ENCODE measurements at regions of chr5 and their contacts with region 1.

Region 1: DNA sequence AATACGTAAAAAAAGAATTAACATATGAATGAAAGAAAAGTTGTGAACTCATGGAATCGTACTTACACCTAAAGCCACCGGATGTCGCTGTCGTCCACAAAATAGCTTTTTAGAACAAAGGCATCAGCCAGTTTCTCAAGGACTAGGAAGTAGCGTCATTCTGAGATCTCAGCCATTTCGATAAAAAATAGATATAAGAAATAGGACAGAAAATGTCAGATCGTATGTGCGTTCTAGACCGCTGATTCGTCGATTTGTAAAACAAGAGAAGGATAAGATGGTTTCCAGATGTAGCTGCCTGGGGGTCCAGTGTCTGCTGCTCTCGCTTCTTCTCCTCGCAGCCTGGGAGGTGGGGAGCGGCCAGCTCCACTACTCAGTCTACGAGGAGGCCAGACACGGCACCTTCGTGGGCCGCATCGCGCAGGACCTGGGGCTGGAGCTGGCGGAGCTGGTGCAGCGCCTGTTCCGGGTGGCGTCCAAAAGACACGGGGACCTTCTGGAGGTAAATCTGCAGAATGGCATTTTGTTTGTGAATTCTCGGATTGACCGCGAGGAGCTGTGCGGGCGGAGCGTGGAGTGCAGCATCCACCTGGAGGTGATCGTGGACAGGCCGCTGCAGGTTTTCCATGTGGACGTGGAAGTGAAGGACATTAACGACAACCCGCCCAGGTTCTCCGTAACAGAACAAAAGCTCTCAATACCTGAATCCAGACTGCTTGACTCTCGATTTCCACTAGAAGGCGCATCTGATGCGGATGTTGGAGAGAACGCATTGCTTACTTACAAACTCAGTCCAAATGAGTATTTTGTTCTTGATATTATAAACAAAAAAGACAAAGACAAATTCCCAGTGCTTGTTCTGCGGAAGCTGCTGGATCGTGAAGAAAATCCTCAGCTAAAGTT is at the start of gene PCDHA10:
- DNase-seq: peak; percentile 48
- ATAC-seq: peak; percentile 84
- H3K4me3 Mint-ChIP-seq: peak within 1 kb of the TSS; percentile 92
- H3K27ac Mint-ChIP-seq: peak within 1 kb of the TSS; percentile 78
- H3K4me1 Mint-ChIP-seq: peaks cover 23% of the 10 kb centered on the region
- H3K27me3 Mint-ChIP-seq: no peaks in the 10 kb centered on the region
- CTCF ChIP-seq: peak; percentile 36
- total RNA-seq, gene PCDHA10: 10.8 to 12.0 TPM (median 11.6 TPM) in 3 replicates

Region 2: DNA sequence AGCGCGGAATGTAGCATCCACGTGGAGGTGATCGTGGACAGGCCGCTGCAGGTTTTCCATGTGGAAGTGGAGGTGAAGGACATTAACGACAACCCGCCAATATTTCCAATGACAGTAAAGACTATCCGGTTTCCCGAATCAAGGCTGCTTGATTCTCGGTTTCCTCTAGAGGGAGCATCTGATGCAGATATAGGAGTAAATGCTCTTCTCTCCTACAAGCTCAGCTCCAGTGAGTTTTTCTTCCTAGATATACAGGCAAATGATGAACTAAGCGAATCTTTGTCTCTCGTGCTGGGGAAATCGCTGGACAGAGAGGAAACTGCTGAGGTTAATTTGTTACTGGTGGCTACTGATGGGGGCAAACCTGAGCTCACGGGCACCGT is 60.8 kb before region 1 on chr5:
- CTCF ChIA-PET with region 1: interaction called, 14 read pairs
- POLR2A ChIA-PET with region 1: no interaction called
- DNase-seq: no peak
- ATAC-seq: peak; percentile 88
- H3K4me3 Mint-ChIP-seq: peak overlapping the region; percentile 87
- H3K27ac Mint-ChIP-seq: 0 out of 2 replicates have a peak overlapping the region, but pooled peaks have one; percentile 27
- H3K4me1 Mint-ChIP-seq: peaks cover 4% of the 10 kb centered on the region; the same call in 1 of the 2 replicates
- H3K27me3 Mint-ChIP-seq: no peaks in the 10 kb centered on the region
- CTCF ChIP-seq: no peak

Region 3: GRCh38 chr5:140806834-140807775 is 48.9 kb before region 1 on chr5 and contains the start of gene PCDHA4:
- CTCF ChIA-PET with region 1: interaction called, 19 read pairs
- POLR2A ChIA-PET with region 1: no interaction called
- DNase-seq: peak; percentile 90
- ATAC-seq: peak; percentile 89
- H3K4me3 Mint-ChIP-seq: peak within 1 kb of the TSS; percentile 92
- H3K27ac Mint-ChIP-seq: peak within 1 kb of the TSS; percentile 36; the same call in 1 of the 2 replicates
- H3K4me1 Mint-ChIP-seq: peaks cover 7% of the 10 kb centered on the region
- H3K27me3 Mint-ChIP-seq: no peaks in the 10 kb centered on the region
- CTCF ChIP-seq: peak; percentile 80
- total RNA-seq, gene PCDHA4: 5.4 to 6.3 TPM (median 5.6 TPM) in 3 replicates

Region 4: DNA sequence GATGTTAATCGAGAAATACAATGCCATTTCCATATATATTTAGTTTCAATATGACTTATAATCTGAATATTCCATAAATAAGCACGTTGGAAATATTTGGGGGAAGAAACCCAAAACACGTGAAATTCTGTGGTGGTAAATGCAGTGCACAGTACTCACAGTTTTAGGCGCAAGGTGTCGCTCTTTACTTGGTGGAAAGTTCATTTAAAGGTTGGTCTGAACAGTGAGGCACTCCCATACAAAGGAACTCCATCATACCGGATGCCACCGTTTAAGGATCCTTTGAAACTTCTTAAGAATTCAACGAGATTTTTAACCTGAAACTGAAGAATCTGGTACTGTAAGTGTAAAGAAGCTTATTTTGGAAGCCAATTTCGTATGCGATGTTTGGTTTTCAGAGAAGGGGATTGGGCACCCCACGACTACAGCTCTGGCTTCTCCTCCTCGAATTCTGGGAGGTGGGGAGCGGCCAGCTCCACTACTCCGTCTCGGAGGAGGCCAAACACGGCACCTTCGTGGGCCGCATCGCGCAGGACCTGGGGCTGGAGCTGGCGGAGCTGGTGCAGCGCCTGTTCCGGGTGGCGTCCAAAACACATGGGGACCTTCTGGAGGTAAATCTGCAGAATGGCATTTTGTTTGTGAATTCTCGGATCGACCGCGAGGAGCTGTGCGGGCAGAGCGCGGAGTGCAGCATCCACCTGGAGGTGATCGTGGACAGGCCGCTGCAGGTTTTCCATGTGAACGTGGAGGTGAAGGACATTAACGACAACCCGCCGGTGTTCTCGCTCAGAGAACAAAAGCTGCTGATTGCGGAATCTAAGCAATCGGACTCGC is 12.9 kb after region 1 on chr5 and contains the start of gene PCDHA11:
- CTCF ChIA-PET with region 1: interaction called, 71 read pairs
- POLR2A ChIA-PET with region 1: interaction called, 10 read pairs
- DNase-seq: no peak
- ATAC-seq: peak; percentile 93
- H3K4me3 Mint-ChIP-seq: peak within 1 kb of the TSS; percentile 88
- H3K27ac Mint-ChIP-seq: peak within 1 kb of the TSS; percentile 78
- H3K4me1 Mint-ChIP-seq: peaks cover 16% of the 10 kb centered on the region
- H3K27me3 Mint-ChIP-seq: no peaks in the 10 kb centered on the region
- CTCF ChIP-seq: no peak
- total RNA-seq, gene PCDHA11: 5.8 to 8.7 TPM (median 7.9 TPM) in 3 replicates

Region 5: DNA sequence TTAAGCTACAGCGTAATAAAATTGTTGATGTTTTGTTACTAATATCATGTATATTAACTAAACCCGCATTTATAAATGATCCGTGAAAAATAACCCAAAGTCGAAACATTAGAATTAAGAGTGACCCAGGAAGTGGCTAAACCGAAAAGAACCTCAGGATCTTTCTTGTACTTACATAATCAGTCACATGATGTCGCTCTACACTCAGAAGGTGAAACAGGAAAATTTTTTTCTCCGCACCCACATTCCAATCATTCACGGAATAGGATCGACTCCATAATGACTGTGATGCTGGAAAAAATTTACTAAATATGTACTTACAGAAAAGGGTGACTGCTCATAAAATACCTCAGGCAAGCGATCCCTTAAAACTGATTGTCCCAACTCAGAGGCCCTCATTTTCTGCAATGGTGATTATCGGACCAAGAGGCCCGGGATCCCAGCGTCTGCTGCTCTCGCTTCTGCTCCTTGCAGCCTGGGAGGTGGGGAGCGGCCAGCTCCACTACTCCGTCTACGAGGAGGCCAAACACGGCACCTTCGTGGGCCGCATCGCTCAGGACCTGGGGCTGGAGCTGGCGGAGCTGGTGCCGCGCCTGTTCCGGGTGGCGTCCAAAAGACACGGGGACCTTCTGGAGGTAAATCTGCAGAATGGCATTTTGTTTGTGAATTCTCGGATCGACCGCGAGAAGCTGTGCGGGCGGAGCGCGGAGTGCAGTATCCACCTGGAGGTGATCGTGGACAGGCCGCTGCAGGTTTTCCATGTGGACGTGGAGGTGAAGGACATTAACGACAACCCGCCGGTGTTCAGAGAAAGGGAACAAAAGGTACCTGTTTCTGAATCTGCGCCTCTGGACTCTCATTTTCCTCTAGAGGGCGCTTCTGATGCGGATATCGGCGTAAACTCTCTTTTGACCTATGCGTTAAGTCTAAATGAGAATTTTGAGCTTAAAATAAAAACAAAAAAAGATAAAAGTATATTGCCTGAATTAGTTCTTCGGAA is 19.3 kb after region 1 on chr5 and contains the start of gene PCDHA12:
- CTCF ChIA-PET with region 1: interaction called, 29 read pairs
- POLR2A ChIA-PET with region 1: no interaction called
- DNase-seq: no peak
- ATAC-seq: peak; percentile 59
- H3K4me3 Mint-ChIP-seq: peak within 1 kb of the TSS; percentile 99
- H3K27ac Mint-ChIP-seq: peak within 1 kb of the TSS; percentile 93
- H3K4me1 Mint-ChIP-seq: peaks cover 28% of the 10 kb centered on the region
- H3K27me3 Mint-ChIP-seq: no peaks in the 10 kb centered on the region
- CTCF ChIP-seq: peak; percentile 42; the same call in 1 of the 2 replicates
- total RNA-seq, gene PCDHA12: 9.6 to 10.7 TPM (median 10.1 TPM) in 3 replicates

Region 6: GRCh38 chr5:140916349-140916748 is 60.3 kb after region 1 on chr5:
- CTCF ChIA-PET with region 1: no interaction called
- POLR2A ChIA-PET with region 1: no interaction called
- DNase-seq: no peak
- ATAC-seq: no peak
- H3K4me3 Mint-ChIP-seq: no peak overlapping the region
- H3K27ac Mint-ChIP-seq: no peak overlapping the region
- H3K4me1 Mint-ChIP-seq: no peaks in the 10 kb centered on the region
- H3K27me3 Mint-ChIP-seq: no peaks in the 10 kb centered on the region; the same call in 1 of the 2 replicates
- CTCF ChIP-seq: no peak

Region 7: GRCh38 chr5:140966293-140967225 is 110.5 kb after region 1 on chr5 and contains the start of gene PCDHAC2:
- CTCF ChIA-PET with region 1: interaction called, 11 read pairs
- POLR2A ChIA-PET with region 1: no interaction called
- DNase-seq: peak; percentile 78
- ATAC-seq: peak; percentile 77
- H3K4me3 Mint-ChIP-seq: peak within 1 kb of the TSS; percentile 92
- H3K27ac Mint-ChIP-seq: peak within 1 kb of the TSS; percentile 51; the same call in 1 of the 2 replicates
- H3K4me1 Mint-ChIP-seq: peaks cover 50% of the 10 kb centered on the region
- H3K27me3 Mint-ChIP-seq: peaks cover 21% of the 10 kb centered on the region
- CTCF ChIP-seq: no peak
- total RNA-seq, gene PCDHAC2: 6.7 to 11.3 TPM (median 7.9 TPM) in 3 replicates

Region 8: GRCh38 chr5:141050622-141051525 is 194.9 kb after region 1 on chr5 and contains the start of gene PCDHB1:
- CTCF ChIA-PET with region 1: interaction called, 20 read pairs
- POLR2A ChIA-PET with region 1: no interaction called
- DNase-seq: peak; percentile 26
- ATAC-seq: peak; percentile 80
- H3K4me3 Mint-ChIP-seq: peak within 1 kb of the TSS; percentile 82
- H3K27ac Mint-ChIP-seq: peak within 1 kb of the TSS; percentile 73
- H3K4me1 Mint-ChIP-seq: peaks cover 13% of the 10 kb centered on the region
- H3K27me3 Mint-ChIP-seq: peaks cover 45% of the 10 kb centered on the region
- CTCF ChIP-seq: no peak
- total RNA-seq, gene PCDHB1: 0.09 to 0.13 TPM (median 0.11 TPM) in 3 replicates

Measured in WTC11 (cell line).